Tibial artery (tissue), 4 donors: ENCODE measurements at regions of chr15 and their contacts with region 1.

Region 1: DNA sequence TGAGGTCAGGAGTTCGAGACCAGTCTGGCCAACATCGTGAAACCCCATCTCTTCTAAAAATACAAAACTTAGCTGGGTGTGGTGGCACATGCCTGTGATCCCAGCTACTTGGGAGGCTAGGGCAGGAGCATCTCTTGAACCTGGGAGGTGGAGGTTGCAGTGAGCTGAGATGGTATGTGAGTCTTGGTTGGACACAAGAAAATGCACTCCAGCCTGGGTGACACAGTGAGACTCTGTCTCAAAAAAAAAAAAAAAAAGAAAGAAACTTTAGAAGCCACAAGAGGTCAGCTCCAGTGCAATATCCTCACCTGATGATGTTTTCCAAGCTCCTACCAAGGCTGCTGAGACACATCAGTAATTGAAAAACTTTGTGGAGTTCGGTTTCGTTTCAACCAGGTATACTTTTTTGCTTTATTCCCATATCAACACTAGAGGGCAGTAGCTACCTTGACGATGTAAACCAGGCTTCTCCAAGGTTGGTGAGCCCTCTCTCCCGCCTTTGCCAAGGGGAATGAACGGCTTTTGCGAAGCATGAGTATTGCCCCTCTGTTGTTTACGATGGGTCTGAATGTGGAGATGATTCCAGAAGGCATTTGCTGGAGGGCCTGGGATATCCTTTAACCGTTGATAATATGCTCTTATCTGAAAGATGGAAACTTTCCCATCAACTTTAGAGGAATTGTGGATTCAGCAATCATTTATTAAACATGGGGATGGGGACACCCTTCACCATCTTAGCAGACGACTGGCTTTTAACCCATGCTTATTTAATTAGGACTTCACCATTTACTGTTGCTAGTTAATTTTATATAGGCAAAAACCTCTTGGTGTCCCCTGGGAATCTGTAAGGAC is 202.8 kb downstream of the SV2B start:
- DNase-seq: no peak
- H3K4me3 ChIP-seq: no peak overlapping the region
- H3K27ac ChIP-seq: no peak overlapping the region
- H3K4me1 ChIP-seq: peaks cover 0 to 3% (median 0%) of the 10 kb centered on the region in 4 donors
- H3K27me3 ChIP-seq: peaks cover 0 to 30% of the 10 kb centered on the region in 2 donors
- CTCF ChIP-seq: peak; percentile 64 to 66

Region 2: DNA sequence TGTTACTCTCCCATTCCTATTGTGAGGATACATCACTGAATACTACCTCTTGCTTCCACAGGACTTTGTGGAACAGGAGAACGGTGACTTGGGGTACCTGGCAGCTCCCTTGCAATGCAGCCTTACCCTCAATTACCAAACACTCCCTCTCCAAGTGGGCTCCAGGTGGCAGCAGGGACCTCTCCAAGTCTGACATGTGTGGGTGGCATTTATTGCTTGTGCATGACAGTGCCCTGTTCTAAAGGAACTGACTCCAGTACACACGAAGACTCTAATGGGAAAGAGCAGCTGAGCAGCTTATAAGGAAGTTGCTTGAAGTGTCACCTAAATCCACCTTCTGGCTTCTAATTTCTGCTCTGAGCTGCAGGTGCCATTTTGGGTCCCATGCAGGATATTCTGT is 376.6 kb after region 1 on chr15:
- intact Hi-C with region 1: no loop called
- DNase-seq: no peak
- H3K4me3 ChIP-seq: no peak overlapping the region
- H3K27ac ChIP-seq: no peak overlapping the region
- H3K4me1 ChIP-seq: no peaks in the 10 kb centered on the region
- H3K27me3 ChIP-seq: peaks cover 0 to 1% of the 10 kb centered on the region in 2 donors
- CTCF ChIP-seq: no peak

Region 3: DNA sequence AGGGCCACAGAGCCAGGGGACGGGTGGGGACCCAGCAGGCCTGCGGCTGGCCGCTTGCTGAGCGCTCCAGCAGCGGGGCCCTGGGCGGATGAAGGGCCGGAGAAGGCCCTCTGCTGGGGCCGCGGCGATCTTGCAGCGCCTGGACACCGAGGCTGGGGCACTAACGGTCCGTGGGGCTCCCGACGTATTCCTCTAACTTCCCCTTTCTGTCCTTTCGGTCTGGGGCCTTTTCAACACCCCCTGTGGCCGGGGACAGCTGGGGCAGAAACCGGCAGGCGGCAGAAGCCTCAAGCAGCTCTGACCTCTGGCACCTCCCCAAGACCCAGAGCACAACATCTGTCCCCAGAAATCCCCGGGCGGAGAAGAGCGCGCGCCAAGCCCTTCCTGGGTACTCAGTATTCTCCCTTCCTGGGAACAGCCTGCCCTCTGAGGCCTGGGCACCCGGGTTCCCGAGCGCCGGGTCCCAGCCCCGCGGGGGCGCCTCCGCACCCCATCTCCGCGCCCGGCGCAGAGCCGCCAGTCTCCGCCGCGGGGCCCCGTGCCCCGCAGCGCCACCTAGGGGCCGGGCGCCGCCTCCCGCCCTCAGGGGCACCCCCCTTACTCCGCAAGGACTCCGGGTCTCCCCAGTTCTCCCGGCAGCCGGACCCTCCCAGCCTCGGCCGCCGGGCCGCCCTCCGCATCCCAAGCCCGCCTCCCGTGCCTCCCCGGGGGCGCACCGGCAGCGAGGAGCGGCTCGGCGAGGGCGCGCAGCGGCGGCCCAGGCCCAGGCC is 550.1 kb after region 1 on chr15:
- intact Hi-C with region 1: loop called (anchors 10 kb)
- DNase-seq: peak; percentile 77 to 87
- H3K4me3 ChIP-seq: peak overlapping the region; percentile 83 to 84
- H3K27ac ChIP-seq: peak overlapping the region; percentile 78 to 84
- H3K4me1 ChIP-seq: peaks cover 0 to 41% (median 22%) of the 10 kb centered on the region in 4 donors
- H3K27me3 ChIP-seq: no peaks in the 10 kb centered on the region
- CTCF ChIP-seq: peak; percentile 60 to 73